Pancreas (tissue), 10 donors: ENCODE measurements at regions of chr1 and their contacts with region 1.

Region 1: DNA sequence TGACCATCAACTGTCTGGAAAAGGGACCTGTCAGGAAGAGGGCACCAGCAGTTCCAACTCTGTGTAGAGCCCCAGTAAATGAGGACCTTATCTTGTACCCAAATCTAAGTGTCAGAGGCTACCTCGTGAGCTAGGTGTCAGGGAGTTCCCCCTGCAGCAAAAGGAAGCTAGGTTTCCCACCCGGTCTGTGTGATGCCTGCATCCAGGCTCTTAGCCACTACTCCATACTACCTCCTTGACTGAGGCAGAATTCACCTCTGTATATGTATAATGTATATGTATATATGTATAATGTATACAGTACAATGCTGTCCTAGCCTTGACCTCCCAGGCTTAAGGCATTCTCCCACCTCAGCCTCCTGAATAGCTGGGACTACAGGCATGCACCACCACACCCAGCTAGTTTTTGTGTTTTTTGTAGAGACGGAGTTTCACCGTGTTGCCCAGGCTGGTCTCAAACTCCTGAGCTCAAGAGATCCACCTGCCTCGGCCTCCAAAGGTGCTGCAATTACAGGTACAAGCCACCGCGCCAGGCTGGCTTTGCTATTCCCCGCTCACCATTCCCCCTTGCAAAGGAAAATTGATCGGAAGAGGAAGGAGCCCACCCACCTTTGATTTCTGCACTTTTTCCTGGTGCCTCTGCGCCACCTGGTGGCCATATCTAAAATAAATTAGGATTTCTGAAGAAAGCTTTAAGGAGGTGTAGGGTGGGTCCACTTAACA is 15.7 kb upstream of the LUZP1 start:
- DNase-seq: peak in 1 of 6 donors; percentile 31
- ATAC-seq: peak in 3 of 4 donors; percentile 68 to 72 (median 69)
- H3K4me3 ChIP-seq: peak overlapping the region in 2 of 4 donors; percentile 18 to 25
- H3K27ac ChIP-seq: no peak overlapping the region
- H3K4me1 ChIP-seq: no peaks in the 10 kb centered on the region
- H3K27me3 ChIP-seq: peaks cover 0 to 7% (median 0%) of the 10 kb centered on the region in 4 donors
- CTCF ChIP-seq: peak; percentile 50 to 74 (median 66)

Region 2: GRCh38 chr1:22976461-22977243 is 207.7 kb before region 1 on chr1:
- intact Hi-C with region 1: loop called in 2 of 3 experiments (anchors 5 to 10 kb)
- DNase-seq: peak in 5 of 6 donors; percentile 28 to 68 (median 51)
- ATAC-seq: peak; percentile 94 to 99 (median 98)
- H3K4me3 ChIP-seq: no peak overlapping the region
- H3K27ac ChIP-seq: no peak overlapping the region
- H3K4me1 ChIP-seq: no peaks in the 10 kb centered on the region
- H3K27me3 ChIP-seq: no peaks in the 10 kb centered on the region
- CTCF ChIP-seq: peak; percentile 12 to 44 (median 34)

Region 3: DNA sequence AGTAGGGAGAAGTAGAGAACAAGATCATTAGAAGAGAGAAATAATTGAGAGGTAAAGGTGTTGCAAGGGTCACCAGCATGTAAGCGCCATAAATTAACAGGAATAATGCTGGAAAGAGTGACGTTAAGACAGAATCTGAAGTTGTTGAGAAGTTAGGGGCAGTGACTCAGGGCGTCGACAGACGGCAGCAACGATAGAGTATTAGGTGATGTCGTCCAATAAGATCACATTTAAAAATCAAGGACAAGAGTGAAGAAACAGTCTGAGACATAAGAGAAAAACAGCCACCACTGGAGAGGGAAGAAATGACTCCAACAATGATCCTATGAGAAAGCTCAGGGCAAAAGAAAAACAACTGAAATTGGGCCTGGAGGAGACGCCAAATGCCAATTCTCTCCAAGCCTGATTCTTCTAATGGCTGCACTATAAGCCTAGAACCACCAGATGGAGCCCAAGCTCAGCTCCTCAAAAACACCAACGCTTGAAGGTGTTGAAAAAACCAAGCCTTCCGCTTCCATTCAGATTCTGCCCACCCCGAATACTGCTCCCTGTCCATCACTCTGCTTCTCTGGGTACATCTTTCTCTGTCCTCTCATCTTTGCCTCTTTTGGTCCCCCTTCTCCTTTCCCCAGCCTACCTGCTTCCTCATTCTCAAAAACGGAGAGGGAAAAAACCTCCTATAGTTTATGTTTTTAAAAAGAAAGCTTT is 85.8 kb before region 1 on chr1:
- intact Hi-C with region 1: loop called (anchors 2 to 10 kb)
- DNase-seq: peak in 3 of 6 donors; percentile 26 to 65 (median 41)
- ATAC-seq: peak; percentile 85 to 92 (median 90)
- H3K4me3 ChIP-seq: no peak overlapping the region
- H3K27ac ChIP-seq: no peak overlapping the region
- H3K4me1 ChIP-seq: peaks cover 0 to 28% (median 0%) of the 10 kb centered on the region in 3 donors
- H3K27me3 ChIP-seq: no peaks in the 10 kb centered on the region
- CTCF ChIP-seq: peak; percentile 69 to 81 (median 72)